ENCODE measurements at regions of chr1 and their contacts with region 1.

Region 1: DNA sequence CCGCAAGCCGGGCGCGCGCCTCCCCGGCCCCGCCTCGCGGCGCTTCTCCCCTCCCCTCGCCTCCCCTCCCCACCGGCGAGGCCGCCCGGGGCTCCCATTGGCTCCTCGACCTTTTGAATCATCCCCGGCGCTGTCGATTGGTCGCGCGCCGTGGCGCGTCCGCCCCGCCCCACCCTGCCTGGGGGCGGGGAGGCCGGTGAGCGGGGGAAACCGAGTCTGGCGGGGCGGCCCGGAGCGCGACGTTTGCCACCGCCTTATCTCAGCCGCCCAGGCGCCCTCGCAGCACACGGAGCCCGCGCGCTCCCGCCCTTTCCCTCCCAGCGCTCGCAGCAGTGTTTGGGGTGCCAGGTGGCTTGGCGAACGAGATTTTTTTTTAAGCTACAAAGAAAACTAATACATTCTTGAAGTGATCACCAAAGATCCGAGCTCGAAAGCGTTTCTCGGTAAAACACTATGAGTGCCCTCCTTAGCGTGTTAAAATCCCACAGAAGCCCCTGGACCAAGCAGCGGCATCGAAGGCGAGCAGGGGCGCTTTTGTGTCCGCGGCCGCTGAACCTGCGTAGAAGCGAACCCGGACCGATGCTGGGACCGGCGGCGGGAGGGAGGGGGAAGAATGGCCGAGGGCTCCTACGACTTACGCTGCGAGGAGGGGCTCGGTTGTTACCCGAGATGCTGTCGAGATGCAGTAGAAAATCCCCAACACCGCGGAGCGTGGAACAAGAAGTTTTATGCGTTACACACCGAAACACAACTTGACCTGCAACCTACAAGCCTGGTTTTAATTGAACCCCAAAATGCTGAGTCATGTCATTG is 436 bp upstream of the LBR start:
- DNase-seq: peak; percentile 89
- H3K4me3 ChIP-seq: peak overlapping the region; percentile 79 to 91 (median 87)
- H3K27ac ChIP-seq: peak overlapping the region; percentile 84
- H3K4me1 ChIP-seq: peaks cover 39% of the 10 kb centered on the region
- H3K27me3 ChIP-seq: no peaks in the 10 kb centered on the region
- CTCF ChIP-seq: no peak

Region 2: DNA sequence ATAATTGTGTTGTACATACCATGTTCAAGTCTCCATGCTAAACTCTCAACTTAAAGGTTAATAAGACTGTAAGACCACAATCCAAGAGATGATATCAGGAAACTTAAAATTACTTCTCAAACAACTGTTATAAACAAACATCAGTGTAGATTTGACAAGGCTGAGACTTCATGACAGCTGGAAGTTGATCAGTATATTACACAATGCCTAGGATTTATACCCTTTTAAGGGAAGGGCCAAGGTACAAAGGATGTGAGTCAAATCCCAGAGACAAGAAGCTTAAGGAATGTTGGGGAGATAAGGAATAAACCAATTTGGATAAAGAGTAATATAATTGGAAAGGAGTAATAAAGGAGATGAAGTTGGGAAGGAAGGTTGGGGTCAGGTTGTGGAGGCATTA is 99.2 kb before region 1 on chr1:
- CTCF ChIA-PET with region 1: no interaction called
- dilution Hi-C with region 1: loop called (anchors 5 kb)
- in situ Hi-C with region 1: no loop called
- intact Hi-C with region 1: no loop called
- DNase-seq: no peak
- H3K4me3 ChIP-seq: no peak overlapping the region
- H3K27ac ChIP-seq: no peak overlapping the region
- H3K4me1 ChIP-seq: peaks cover 8% of the 10 kb centered on the region
- H3K27me3 ChIP-seq: no peaks in the 10 kb centered on the region
- CTCF ChIP-seq: no peak

Region 3: DNA sequence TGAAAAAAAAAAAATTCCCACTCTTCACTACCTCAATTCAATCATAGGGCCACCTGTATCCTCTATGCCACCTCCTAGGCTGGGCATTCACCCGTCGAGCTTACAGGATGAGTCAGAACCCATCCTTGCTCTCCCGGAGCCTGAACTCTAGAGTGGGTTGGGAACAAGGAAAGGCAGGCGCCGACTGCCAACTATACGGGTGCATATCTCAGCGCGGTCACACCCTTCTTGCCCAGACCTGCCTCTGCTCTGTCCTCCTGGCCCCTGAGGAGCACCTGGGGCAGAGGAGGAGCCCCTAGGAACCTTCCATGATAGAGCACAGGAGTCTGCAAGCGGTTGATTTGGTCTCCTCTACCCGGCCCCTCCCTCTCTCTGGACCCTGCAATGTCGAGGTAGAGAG is 21.0 kb after region 1 on chr1:
- CTCF ChIA-PET with region 1: interaction called, 4 read pairs
- dilution Hi-C with region 1: no loop called
- in situ Hi-C with region 1: no loop called
- intact Hi-C with region 1: loop called (anchors 1 kb)
- DNase-seq: peak; percentile 98
- H3K4me3 ChIP-seq: no peak overlapping the region
- H3K27ac ChIP-seq: no peak overlapping the region
- H3K4me1 ChIP-seq: peaks cover 37% of the 10 kb centered on the region
- H3K27me3 ChIP-seq: no peaks in the 10 kb centered on the region
- CTCF ChIP-seq: no peak

Measured in mammary epithelial cell (primary cell).